Activated T-helper 1 cell treated with anti-CD3 and anti-CD28 coated beads, Interleukin-12 subunit alpha, Interleukin-12 subunit beta, Interleukin-2, Interleukin-4 antibody, amounts not matched to agents 30 ng/mL and 10 ng/mL and 1 ng/mL, durations not matched to agents 14 hours and 24 hours and 36 hours (primary cell): ENCODE measurements at regions of chr22 and their contacts with region 1.

Region 1: GRCh38 chr22:40856513-40857308 is at the starts of genes ST13 and XPNPEP3:
- DNase-seq: peak; percentile 96
- H3K4me3 Mint-ChIP-seq: peak within 1 kb of the TSS; percentile 98
- H3K27ac Mint-ChIP-seq: peak within 1 kb of the TSS; percentile 100
- H3K4me1 Mint-ChIP-seq: peaks cover 38% of the 10 kb centered on the region
- H3K27me3 Mint-ChIP-seq: no peaks in the 10 kb centered on the region
- total RNA-seq, gene ST13: 190 and 192 TPM in 2 replicates
- total RNA-seq, gene XPNPEP3: 14.7 and 15.3 TPM in 2 replicates

Region 2: GRCh38 chr22:40368016-40368415 is 488.7 kb before region 1 on chr22:
- intact Hi-C with region 1: loop called (anchors 2 kb)
- DNase-seq: no peak
- H3K4me3 Mint-ChIP-seq: no peak overlapping the region
- H3K27ac Mint-ChIP-seq: no peak overlapping the region
- H3K4me1 Mint-ChIP-seq: peaks cover 16% of the 10 kb centered on the region
- H3K27me3 Mint-ChIP-seq: no peaks in the 10 kb centered on the region

Region 3: GRCh38 chr22:40443732-40444131 is 413.0 kb before region 1 on chr22:
- intact Hi-C with region 1: no loop called
- DNase-seq: no peak
- H3K4me3 Mint-ChIP-seq: no peak overlapping the region
- H3K27ac Mint-ChIP-seq: no peak overlapping the region
- H3K4me1 Mint-ChIP-seq: peaks cover 11% of the 10 kb centered on the region
- H3K27me3 Mint-ChIP-seq: no peaks in the 10 kb centered on the region

Region 4: DNA sequence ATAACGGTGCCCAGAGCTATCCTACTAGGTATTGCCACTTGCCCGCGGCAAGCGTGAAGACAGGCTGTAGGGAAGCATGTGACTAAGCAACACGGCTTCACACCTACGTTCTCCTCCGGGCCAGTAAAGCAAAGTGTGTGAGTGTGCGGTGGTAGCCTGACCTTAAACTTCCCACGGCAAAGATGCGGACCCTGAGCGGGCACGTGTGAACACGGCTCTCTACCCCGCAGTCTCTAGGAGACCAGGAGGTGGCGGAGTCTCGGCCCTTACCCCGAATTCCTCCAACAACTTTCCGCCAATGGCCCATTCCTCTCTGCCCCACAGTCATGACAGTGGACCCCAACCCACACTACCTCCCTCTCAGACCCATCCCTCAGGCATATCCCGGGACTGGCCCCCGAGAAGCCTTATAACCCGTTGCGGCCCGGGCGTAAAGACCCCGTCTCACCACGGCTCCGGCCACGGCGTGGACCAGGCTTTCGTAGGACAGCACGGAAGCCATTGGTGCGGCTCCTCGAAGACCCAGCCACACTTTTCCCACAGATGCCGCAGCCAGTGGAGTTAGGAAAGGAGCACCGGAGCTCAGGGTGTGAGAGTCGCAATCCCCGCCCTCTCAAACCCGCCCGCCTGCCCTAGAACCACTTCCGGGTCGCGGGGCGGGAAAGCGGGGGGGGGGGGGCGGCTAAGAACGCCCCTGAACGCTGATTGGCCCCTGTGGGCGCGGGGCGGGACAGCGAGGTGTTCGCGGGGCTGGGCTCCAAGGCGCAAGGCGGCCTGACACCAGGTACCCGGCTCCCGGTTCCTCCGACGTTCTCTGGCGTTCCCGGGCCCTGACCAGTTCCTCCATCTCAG is 37.7 kb before region 1 on chr22 and contains the start of gene SLC25A17:
- intact Hi-C with region 1: loop called (anchors 1 kb)
- DNase-seq: peak; percentile 82
- H3K4me3 Mint-ChIP-seq: peak within 1 kb of the TSS; percentile 87
- H3K27ac Mint-ChIP-seq: peak within 1 kb of the TSS; percentile 93
- H3K4me1 Mint-ChIP-seq: peaks cover 33% of the 10 kb centered on the region
- H3K27me3 Mint-ChIP-seq: no peaks in the 10 kb centered on the region
- total RNA-seq, gene SLC25A17: 29.4 and 34.0 TPM in 2 replicates

Region 5: GRCh38 chr22:40911772-40912171 is 55.1 kb after region 1 on chr22:
- intact Hi-C with region 1: no loop called
- DNase-seq: no peak
- H3K4me3 Mint-ChIP-seq: no peak overlapping the region
- H3K27ac Mint-ChIP-seq: no peak overlapping the region
- H3K4me1 Mint-ChIP-seq: no peaks in the 10 kb centered on the region
- H3K27me3 Mint-ChIP-seq: no peaks in the 10 kb centered on the region

Region 6: GRCh38 chr22:40950962-40951794 is 94.5 kb after region 1 on chr22 and contains the start of gene RBX1:
- intact Hi-C with region 1: loop called (anchors 1 kb)
- DNase-seq: peak; percentile 98
- H3K4me3 Mint-ChIP-seq: peak within 1 kb of the TSS; percentile 98
- H3K27ac Mint-ChIP-seq: peak within 1 kb of the TSS; percentile 98
- H3K4me1 Mint-ChIP-seq: peaks cover 33% of the 10 kb centered on the region
- H3K27me3 Mint-ChIP-seq: no peaks in the 10 kb centered on the region
- total RNA-seq, gene RBX1: 90.9 and 94.4 TPM in 2 replicates

Region 7: DNA sequence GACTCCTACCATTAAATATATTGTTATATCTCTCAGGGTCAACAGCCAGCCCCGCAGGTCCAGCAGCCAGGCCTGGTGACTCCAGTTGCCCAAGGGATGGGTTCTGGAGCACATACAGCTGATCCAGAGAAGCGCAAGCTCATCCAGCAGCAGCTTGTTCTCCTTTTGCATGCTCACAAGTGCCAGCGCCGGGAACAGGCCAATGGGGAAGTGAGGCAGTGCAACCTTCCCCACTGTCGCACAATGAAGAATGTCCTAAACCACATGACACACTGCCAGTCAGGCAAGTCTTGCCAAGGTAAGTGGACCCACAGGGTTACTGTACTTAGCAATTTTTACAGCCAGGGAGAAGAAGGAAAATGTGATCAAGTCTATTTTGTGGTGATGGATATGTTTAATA is 270.7 kb after region 1 on chr22:
- intact Hi-C with region 1: no loop called
- DNase-seq: no peak
- H3K4me3 Mint-ChIP-seq: no peak overlapping the region
- H3K27ac Mint-ChIP-seq: no peak overlapping the region
- H3K4me1 Mint-ChIP-seq: peaks cover 12% of the 10 kb centered on the region
- H3K27me3 Mint-ChIP-seq: no peaks in the 10 kb centered on the region

Region 8: DNA sequence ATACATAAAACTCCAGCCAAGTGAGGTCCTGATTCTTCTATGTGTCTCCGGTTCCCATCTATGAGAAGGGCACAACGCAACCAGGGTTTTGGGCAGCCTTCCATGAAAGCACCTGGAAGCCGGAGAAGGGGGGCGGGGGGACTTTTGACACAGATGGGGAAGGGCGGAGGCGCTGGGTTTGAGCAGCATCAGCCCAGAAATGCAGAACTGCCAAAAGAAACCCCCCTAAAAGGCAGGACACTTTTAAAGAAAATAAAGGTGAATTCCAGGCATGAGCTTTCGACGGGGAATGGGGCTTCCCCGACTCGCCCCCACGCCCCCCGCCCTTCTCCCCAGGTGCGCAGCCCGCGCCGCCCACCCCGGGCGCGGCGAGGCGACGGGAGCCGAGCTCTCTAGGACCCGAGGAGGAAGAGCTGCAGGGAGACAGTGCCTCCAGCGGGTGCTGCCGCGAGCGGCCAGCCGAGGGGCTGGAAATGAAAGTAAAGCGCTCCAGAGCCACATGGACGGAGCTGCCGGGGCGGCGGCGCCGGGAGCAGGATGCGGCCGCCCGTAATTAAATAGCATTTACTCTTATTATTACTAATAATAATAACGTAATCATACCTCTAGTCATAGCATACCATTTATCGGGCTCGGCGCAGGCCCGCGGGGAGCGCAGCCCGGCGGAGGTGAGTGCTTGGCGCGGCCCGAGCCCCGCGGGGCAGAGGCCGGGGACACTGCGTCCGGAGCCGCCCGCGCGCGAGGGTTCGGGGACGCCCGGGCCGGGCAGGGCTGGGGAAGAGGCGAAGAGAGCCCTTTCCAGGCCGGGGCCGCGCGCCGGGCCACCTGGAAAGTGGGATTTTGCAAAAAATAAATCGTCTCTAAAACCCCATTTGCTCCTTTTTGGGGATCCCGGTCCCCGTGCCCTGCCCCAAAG is 444.7 kb after region 1 on chr22 and contains the start of gene ZC3H7B:
- intact Hi-C with region 1: loop called (anchors 5 kb)
- DNase-seq: peak; percentile 81
- H3K4me3 Mint-ChIP-seq: peak within 1 kb of the TSS; percentile 87
- H3K27ac Mint-ChIP-seq: peak within 1 kb of the TSS; percentile 82
- H3K4me1 Mint-ChIP-seq: peaks cover 36% of the 10 kb centered on the region
- H3K27me3 Mint-ChIP-seq: no peaks in the 10 kb centered on the region
- total RNA-seq, gene ZC3H7B: 77.1 and 79.0 TPM in 2 replicates

Region 9: GRCh38 chr22:41688365-41689211 is 831.9 kb after region 1 on chr22 and contains the start of gene SNU13:
- intact Hi-C with region 1: loop called (anchors 10 kb)
- DNase-seq: peak; percentile 92
- H3K4me3 Mint-ChIP-seq: peak within 1 kb of the TSS; percentile 98
- H3K27ac Mint-ChIP-seq: peak within 1 kb of the TSS; percentile 98
- H3K4me1 Mint-ChIP-seq: peaks cover 17% of the 10 kb centered on the region
- H3K27me3 Mint-ChIP-seq: no peaks in the 10 kb centered on the region
- total RNA-seq, gene SNU13: 337 and 339 TPM in 2 replicates